ENCODE measurements at regions of chr9 and their contacts with region 1.

Region 1: GRCh38 chr9:89602978-89603766 is 1.6 kb upstream of the GADD45G start:
- DNase-seq: peak; percentile 97
- H3K4me3 ChIP-seq: peak overlapping the region; percentile 21 to 75 (median 53)
- H3K27ac ChIP-seq: peak overlapping the region in 2 of 8 donors; percentile 83 to 91
- H3K4me1 ChIP-seq: peaks cover 25 to 49% (median 44%) of the 10 kb centered on the region in 6 donors
- H3K27me3 ChIP-seq: peaks cover 0 to 34% (median 3%) of the 10 kb centered on the region in 7 donors
- CTCF ChIP-seq: peak; percentile 57 to 93 (median 86)
- POLR2A ChIP-seq: no peak

Region 2: DNA sequence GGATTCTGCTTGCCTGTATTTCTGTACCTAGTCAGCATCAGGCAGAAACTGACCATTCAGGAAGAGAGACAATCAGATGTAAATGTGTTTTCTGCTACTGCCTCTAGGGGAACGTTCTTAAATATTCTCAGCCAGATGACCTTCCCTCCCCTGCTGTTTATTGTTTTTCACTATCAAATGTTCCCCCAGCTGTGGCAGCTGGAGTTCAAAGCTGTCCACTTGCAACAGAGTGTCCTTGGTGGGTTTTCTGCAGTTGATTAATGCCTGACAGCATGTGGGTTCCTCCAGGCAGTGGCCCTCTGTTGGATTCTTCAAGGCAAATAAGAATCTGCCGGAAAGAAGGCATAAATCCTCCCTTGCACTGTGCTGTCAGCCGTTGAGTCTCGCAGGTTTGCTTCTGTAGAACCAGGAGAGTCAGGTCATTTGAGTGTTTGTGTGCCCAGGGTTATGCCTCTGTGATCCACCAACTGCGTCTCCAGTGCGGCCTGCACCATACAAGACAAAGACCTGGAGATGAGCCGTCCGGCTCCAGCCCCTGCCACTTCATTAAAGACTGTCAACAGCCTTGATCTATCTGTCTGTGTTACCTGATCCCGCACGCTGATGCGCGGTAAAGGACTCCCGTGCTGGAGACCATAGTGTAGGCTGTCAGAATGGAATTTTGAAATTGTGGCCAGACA is 205.0 kb after region 1 on chr9:
- intact Hi-C with region 1: loop called (anchors 10 kb)
- DNase-seq: no peak
- H3K4me3 ChIP-seq: no peak overlapping the region
- H3K27ac ChIP-seq: peak overlapping the region in 3 of 8 donors; percentile 23 to 61 (median 38)
- H3K4me1 ChIP-seq: peaks cover 0 to 18% (median 6%) of the 10 kb centered on the region in 6 donors
- H3K27me3 ChIP-seq: no peaks in the 10 kb centered on the region
- CTCF ChIP-seq: peak in 3 of 11 experiments; percentile 23 to 37 (median 30)
- POLR2A ChIP-seq: no peak

Region 3: DNA sequence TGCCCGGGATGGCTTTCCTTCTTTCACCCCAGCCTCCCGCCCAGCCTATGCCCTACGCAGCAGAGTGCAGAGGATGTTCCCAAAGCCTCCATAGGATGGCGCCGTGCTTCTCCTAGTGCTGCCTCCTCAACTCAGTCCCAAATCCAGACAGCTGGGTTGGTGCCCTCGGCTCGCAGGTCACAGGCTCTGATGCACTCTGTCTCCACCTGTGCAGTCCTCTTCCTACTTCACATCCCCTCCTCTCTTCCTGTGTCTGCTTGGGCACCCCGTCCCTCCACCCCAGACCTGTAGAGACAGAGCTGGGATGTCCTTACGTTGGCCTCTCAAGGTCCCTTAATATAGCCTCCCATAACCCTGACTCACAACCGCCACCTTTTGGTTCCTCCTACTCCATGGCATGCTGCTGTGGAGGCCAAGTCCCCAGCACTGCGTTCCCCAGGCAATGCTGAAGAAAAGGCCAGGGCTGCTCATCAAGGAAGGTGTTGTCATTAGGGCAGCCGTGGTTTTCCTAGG is 316.1 kb after region 1 on chr9:
- intact Hi-C with region 1: loop called (anchors 2 kb)
- DNase-seq: no peak
- H3K4me3 ChIP-seq: no peak overlapping the region
- H3K27ac ChIP-seq: no peak overlapping the region
- H3K4me1 ChIP-seq: peaks cover 0 to 6% (median 4%) of the 10 kb centered on the region in 6 donors
- H3K27me3 ChIP-seq: no peaks in the 10 kb centered on the region
- CTCF ChIP-seq: peak in 7 of 11 experiments; percentile 8 to 51 (median 36)
- POLR2A ChIP-seq: no peak

Region 4: DNA sequence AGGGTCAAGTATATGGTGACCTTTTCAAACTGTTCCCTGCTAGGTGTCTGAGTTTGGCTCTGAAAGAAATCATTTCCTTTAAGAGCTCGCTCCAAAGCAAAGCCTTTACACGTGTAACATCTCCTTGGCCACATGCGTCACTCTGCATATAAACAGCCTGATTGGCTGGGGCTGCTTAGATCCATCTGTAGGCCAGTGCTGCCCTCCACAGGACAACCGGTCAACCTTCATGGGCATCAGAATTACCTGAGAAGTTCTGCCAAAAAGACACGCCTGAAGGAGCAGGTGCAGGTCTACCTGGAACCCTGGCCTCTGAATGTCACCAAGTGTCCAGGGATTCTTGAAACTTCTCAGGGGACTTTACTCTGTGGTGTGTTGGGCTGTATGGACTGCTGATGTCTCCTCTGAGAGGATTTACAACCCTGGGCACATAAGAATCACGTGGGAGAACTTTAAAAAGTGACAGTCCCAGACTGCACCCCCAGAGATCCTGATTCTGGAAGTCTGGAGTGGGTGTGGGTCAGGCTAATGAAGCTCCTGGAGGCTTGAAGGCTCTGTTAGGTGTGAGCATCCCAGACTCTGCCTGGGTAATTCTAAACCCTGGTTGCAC is 499.2 kb after region 1 on chr9:
- intact Hi-C with region 1: loop called (anchors 2 kb)
- DNase-seq: peak; percentile 92
- H3K4me3 ChIP-seq: no peak overlapping the region
- H3K27ac ChIP-seq: no peak overlapping the region
- H3K4me1 ChIP-seq: peaks cover 0 to 13% (median 5%) of the 10 kb centered on the region in 6 donors
- H3K27me3 ChIP-seq: peaks cover 0 to 2% (median 0%) of the 10 kb centered on the region in 7 donors
- CTCF ChIP-seq: peak; percentile 65 to 93 (median 82)
- POLR2A ChIP-seq: no peak

Measured in spleen (tissue), 13 donors.